AG04450 (cell line): ENCODE measurements at regions of chr3 and their contacts with region 1.

Region 1: DNA sequence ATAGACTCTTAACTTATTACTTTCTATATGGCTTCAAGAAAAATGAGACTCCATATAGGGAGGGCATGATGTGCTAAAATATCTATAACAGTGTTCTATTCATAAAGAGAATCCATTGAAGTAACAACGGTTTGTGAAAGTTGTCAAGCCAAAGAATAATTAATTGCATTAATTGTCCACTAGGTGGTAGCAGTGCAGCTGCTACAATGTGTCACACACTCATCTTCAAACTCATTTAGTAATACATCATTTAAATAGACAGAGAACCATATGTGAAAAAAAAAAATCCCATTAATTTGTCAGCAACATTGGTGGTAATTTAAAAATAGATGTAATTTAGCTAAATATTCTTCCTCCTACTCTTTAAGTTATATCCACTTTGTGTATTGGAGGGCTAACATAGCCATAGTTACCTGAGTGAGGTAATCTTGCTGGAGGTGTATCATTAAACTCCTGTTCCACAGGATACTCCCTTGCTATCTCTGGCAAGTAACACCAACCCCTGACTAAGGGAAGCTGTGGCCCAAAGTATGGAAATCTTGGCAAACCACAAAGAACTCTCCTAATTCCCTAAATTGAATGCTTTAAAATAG is 3.7 kb upstream of the CPA3 start:
- DNase-seq: peak; percentile 11
- H3K4me3 ChIP-seq: no peak overlapping the region
- H3K27ac ChIP-seq: no peak overlapping the region
- H3K27me3 ChIP-seq: no peaks in the 10 kb centered on the region
- CTCF ChIP-seq: peak; percentile 64

Region 2: DNA sequence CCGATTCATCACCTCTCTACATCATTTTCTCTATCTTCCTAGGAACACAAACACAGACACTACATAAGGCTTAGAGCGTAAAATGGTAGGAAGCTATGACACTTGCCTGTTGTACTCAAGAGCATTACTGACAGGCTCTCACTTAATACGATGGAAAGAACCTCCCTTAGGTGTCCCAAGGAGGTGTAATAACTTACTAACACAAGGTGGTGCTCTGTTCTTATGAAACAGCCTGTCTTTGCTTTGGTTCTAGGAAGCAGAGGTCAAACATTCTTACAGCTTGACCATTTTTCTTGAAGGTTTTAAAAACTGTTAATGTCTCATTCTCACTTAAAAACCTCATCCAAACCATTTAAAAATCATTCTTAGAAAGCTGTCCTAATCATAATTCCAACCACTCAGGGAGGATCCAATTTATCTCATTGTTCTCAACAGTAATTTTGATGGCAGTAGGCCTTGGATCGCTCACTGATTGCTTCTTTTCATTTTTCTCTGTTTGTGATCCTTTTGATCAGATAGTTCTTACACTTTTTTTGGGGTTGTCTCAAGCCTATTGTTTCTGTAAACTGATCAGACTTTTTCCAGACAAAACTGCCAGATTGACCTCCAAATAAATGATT is 481.5 kb before region 1 on chr3:
- CTCF ChIA-PET with region 1: interaction called, 13 read pairs
- POLR2A ChIA-PET with region 1: no interaction called
- DNase-seq: peak; percentile 23
- H3K4me3 ChIP-seq: no peak overlapping the region
- H3K27ac ChIP-seq: no peak overlapping the region
- H3K27me3 ChIP-seq: no peaks in the 10 kb centered on the region
- CTCF ChIP-seq: peak; percentile 65

Region 3: GRCh38 chr3:148847351-148847750 is 14.0 kb before region 1 on chr3:
- CTCF ChIA-PET with region 1: interaction called, 18 read pairs
- POLR2A ChIA-PET with region 1: no interaction called
- DNase-seq: no peak
- H3K4me3 ChIP-seq: no peak overlapping the region
- H3K27ac ChIP-seq: no peak overlapping the region
- H3K27me3 ChIP-seq: no peaks in the 10 kb centered on the region
- CTCF ChIP-seq: no peak

Region 4: DNA sequence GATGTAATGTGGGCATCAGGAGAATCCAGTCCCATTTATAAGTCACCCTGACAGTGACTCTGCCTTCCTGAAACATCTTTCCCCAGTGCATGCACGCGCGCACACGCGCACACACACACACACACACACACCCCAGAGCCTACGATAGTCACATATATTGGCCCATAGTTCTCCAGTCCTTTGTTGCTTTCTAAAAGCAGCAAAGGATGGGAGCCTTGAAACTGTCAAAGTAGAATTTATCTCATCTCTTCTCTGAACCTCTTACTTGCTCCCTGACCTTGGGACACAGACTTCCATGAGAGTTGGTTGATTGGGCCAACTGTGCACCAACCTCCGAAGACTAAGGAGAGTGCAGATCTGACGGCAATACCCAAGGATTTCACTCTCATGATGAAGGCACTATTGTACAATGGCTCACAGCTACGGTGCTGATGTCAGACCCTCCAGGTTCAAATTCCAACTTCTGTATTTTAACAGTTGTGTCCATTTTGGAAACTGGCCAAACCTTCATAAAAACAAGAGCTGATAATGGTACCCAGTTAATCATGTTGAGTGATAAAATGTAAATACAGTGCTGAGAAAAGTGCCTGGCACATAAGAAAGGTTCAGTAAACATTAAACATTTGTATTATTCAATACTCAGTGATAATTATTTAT is 12.0 kb after region 1 on chr3:
- CTCF ChIA-PET with region 1: interaction called, 15 read pairs
- POLR2A ChIA-PET with region 1: no interaction called
- DNase-seq: no peak
- H3K4me3 ChIP-seq: no peak overlapping the region
- H3K27ac ChIP-seq: no peak overlapping the region
- H3K27me3 ChIP-seq: no peaks in the 10 kb centered on the region
- CTCF ChIP-seq: no peak

Region 5: DNA sequence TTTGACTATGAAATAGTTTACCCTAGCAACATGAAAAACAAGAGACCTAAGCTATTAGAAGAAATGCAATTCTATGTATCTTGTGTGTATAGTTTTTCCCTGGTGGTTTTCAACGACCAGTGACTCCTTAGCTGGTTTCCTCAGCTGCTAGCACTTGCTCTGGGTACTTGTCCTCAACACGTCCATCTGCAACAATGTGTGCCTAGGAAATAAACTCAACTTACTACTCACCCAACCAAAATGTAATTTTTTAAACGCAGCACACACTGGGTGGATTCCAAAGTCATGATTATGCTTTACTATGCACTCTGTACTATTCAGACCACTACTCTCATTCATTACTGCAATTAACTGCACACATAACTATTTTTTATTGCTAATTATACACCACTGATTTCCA is 34.7 kb after region 1 on chr3:
- CTCF ChIA-PET with region 1: interaction called, 13 read pairs
- POLR2A ChIA-PET with region 1: no interaction called
- DNase-seq: no peak
- H3K4me3 ChIP-seq: no peak overlapping the region
- H3K27ac ChIP-seq: no peak overlapping the region
- H3K27me3 ChIP-seq: no peaks in the 10 kb centered on the region
- CTCF ChIP-seq: no peak

Region 6: DNA sequence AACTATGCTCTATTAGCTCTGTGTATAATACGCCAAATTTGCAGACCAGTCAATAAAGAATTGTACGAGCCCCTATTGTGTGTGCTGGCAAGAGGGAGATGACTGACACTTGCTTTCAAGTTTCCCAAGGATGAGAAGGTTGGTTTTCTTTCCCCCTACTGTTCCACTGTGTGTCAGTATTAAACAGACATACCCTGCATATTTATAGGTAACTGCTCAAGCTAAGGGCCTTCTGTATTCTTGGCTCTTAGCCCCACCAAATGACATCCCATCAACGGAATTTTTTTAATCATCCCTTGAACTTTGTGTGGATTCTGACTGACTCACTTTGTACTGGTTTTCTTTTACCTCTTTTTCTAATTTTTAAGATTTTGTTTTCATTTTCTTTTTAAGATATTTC is 69.4 kb after region 1 on chr3:
- CTCF ChIA-PET with region 1: interaction called, 10 read pairs
- POLR2A ChIA-PET with region 1: no interaction called
- DNase-seq: peak; percentile 13
- H3K4me3 ChIP-seq: no peak overlapping the region
- H3K27ac ChIP-seq: no peak overlapping the region
- H3K27me3 ChIP-seq: no peaks in the 10 kb centered on the region
- CTCF ChIP-seq: no peak

Region 7: GRCh38 chr3:148943506-148944205 is 82.3 kb after region 1 on chr3:
- CTCF ChIA-PET with region 1: interaction called, 238 read pairs
- POLR2A ChIA-PET with region 1: no interaction called
- DNase-seq: peak; percentile 41
- H3K4me3 ChIP-seq: no peak overlapping the region
- H3K27ac ChIP-seq: no peak overlapping the region
- H3K27me3 ChIP-seq: no peaks in the 10 kb centered on the region
- CTCF ChIP-seq: peak; percentile 78